ENCODE measurements at regions of chr2 and their contacts with region 1.

Region 1: GRCh38 chr2:36355151-36355889 is at the start of gene CRIM1:
- DNase-seq: peak in 5 of 9 donors; percentile 4 to 72 (median 15)
- ATAC-seq: peak; percentile 58
- H3K4me3 ChIP-seq: peak within 1 kb of the TSS; percentile 62
- H3K4me3 Mint-ChIP-seq: peak within 1 kb of the TSS; percentile 64 to 89 (median 86)
- H3K27ac ChIP-seq: no peak within 1 kb of the TSS
- H3K27ac Mint-ChIP-seq: peak within 1 kb of the TSS in 1 of 9 donors; percentile 4
- H3K4me1 ChIP-seq: peaks cover 9 to 13% of the 10 kb centered on the region in 2 donors
- H3K4me1 Mint-ChIP-seq: peaks cover 19 to 44% (median 28%) of the 10 kb centered on the region in 7 donors
- H3K27me3 ChIP-seq: peaks cover 0 to 7% of the 10 kb centered on the region in 2 donors
- H3K27me3 Mint-ChIP-seq: peaks cover 25 to 65% (median 42%) of the 10 kb centered on the region in 5 donors
- total RNA-seq, gene CRIM1: 0.75 to 7.1 (median 1.2) TPM

Region 2: DNA sequence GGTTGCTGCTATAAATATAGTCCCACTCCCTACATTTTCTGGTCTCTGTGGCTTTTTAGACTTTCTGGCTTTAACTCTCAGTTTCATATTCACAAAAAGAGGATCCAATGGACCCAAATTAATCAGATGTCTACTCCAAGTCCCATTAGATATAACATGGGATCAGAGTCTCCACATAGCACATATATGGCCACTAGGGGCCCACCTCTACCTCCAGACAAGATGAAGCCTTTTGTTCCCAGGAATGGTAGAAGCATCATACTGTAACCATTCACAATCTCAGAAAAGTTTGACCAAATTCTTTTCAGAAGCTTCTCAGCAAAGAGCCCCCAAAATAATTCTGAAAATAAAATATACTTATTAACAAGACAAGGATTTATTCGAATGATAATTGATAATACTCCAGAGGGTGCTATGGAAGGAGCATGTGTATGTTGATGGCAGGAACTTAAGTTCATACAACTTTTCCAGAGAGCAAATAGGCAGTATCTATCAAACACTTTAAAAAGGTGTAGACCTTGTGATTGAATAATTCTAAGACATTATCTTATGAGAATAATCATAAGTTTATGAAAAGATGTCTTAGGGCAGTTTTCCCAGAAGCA is 382.1 kb before region 1 on chr2:
- CTCF ChIA-PET with region 1: interaction called, 3 read pairs
- POLR2A ChIA-PET with region 1: no interaction called
- intact Hi-C with region 1: loop called (anchors 1 to 5 kb)
- DNase-seq: no peak
- ATAC-seq: peak; percentile 47
- H3K4me3 ChIP-seq: no peak overlapping the region
- H3K4me3 Mint-ChIP-seq: no peak overlapping the region
- H3K27ac ChIP-seq: no peak overlapping the region
- H3K27ac Mint-ChIP-seq: peak overlapping the region in 1 of 9 donors; percentile 44
- H3K4me1 ChIP-seq: peaks cover 0 to 12% of the 10 kb centered on the region in 2 donors
- H3K4me1 Mint-ChIP-seq: peaks cover 0 to 7% (median 0%) of the 10 kb centered on the region in 7 donors
- H3K27me3 ChIP-seq: no peaks in the 10 kb centered on the region
- H3K27me3 Mint-ChIP-seq: peaks cover 0 to 26% (median 0%) of the 10 kb centered on the region in 5 donors

Region 3: GRCh38 chr2:36088716-36089328 is 266.5 kb before region 1 on chr2:
- CTCF ChIA-PET with region 1: no interaction called
- POLR2A ChIA-PET with region 1: no interaction called
- intact Hi-C with region 1: no loop called
- DNase-seq: no peak
- ATAC-seq: no peak
- H3K4me3 ChIP-seq: no peak overlapping the region
- H3K4me3 Mint-ChIP-seq: no peak overlapping the region
- H3K27ac ChIP-seq: no peak overlapping the region
- H3K27ac Mint-ChIP-seq: no peak overlapping the region
- H3K4me1 ChIP-seq: no peaks in the 10 kb centered on the region
- H3K4me1 Mint-ChIP-seq: no peaks in the 10 kb centered on the region
- H3K27me3 ChIP-seq: no peaks in the 10 kb centered on the region
- H3K27me3 Mint-ChIP-seq: peaks cover 4 to 10% (median 6%) of the 10 kb centered on the region in 5 donors

Region 4: GRCh38 chr2:36246320-36246990 is 108.9 kb before region 1 on chr2:
- CTCF ChIA-PET with region 1: interaction called, 5 read pairs
- POLR2A ChIA-PET with region 1: no interaction called
- intact Hi-C with region 1: loop called (anchors 1 to 2 kb)
- DNase-seq: peak in 7 of 9 donors; percentile 68 to 87 (median 84)
- ATAC-seq: peak; percentile 89
- H3K4me3 ChIP-seq: no peak overlapping the region
- H3K4me3 Mint-ChIP-seq: peak overlapping the region; percentile 31 to 81 (median 74)
- H3K27ac ChIP-seq: no peak overlapping the region
- H3K27ac Mint-ChIP-seq: peak overlapping the region; percentile 11 to 93 (median 68)
- H3K4me1 ChIP-seq: peaks cover 21 to 52% of the 10 kb centered on the region in 2 donors
- H3K4me1 Mint-ChIP-seq: peaks cover 27 to 68% (median 61%) of the 10 kb centered on the region in 7 donors
- H3K27me3 ChIP-seq: no peaks in the 10 kb centered on the region
- H3K27me3 Mint-ChIP-seq: peaks cover 0 to 13% (median 8%) of the 10 kb centered on the region in 5 donors

Region 5: GRCh38 chr2:36597532-36598377 is 242.4 kb after region 1 on chr2 and contains the start of gene FEZ2:
- CTCF ChIA-PET with region 1: no interaction called
- POLR2A ChIA-PET with region 1: no interaction called
- intact Hi-C with region 1: loop called in 1 of 2 experiments (anchors 1 kb)
- DNase-seq: peak; percentile 24 to 80 (median 41)
- ATAC-seq: peak; percentile 92
- H3K4me3 ChIP-seq: peak within 1 kb of the TSS; percentile 63
- H3K4me3 Mint-ChIP-seq: peak within 1 kb of the TSS; percentile 91 to 98 (median 92)
- H3K27ac ChIP-seq: peak within 1 kb of the TSS; percentile 60
- H3K27ac Mint-ChIP-seq: peak within 1 kb of the TSS; percentile 69 to 97 (median 83)
- H3K4me1 ChIP-seq: peaks cover 9 to 16% of the 10 kb centered on the region in 2 donors
- H3K4me1 Mint-ChIP-seq: peaks cover 26 to 45% (median 35%) of the 10 kb centered on the region in 7 donors
- H3K27me3 ChIP-seq: no peaks in the 10 kb centered on the region
- H3K27me3 Mint-ChIP-seq: no peaks in the 10 kb centered on the region
- total RNA-seq, gene FEZ2: 11.2 to 21.9 (median 14.0) TPM

Region 6: DNA sequence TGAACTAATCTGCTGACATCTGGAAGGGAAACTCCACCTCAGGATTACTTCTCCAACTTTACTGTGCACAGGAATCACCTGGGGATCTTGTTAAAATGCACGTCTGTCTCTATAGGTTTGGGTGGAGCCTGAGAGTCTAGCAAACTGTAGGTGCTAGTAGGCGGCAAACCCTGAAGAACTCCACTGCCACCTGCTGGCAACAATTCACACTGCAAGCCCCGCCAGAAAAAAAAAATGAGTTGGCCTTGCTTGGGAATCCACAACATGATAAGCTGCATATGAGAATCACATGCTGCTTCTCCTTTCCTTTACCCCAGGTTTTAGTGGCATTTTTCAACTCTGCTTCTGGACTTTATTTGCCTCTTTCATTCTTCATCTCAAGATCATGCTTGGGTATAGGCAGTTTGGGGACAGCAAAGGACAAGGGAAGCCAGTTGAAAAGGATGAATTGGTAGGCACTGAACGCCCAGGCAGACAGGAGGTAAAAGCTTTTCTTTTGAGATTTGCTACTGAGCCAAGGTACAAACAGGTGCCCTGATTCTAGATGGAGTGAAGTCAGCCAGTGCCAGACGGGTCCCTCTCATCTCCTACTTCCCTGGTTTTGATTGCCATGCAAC is 430.0 kb after region 1 on chr2:
- CTCF ChIA-PET with region 1: no interaction called
- POLR2A ChIA-PET with region 1: no interaction called
- intact Hi-C with region 1: loop called (anchors 1 to 2 kb)
- DNase-seq: peak; percentile 23 to 74 (median 61)
- ATAC-seq: peak; percentile 85
- H3K4me3 ChIP-seq: no peak overlapping the region
- H3K4me3 Mint-ChIP-seq: no peak overlapping the region
- H3K27ac ChIP-seq: no peak overlapping the region
- H3K27ac Mint-ChIP-seq: peak overlapping the region in 1 of 9 donors; percentile 43
- H3K4me1 ChIP-seq: no peaks in the 10 kb centered on the region
- H3K4me1 Mint-ChIP-seq: peaks cover 0 to 15% (median 2%) of the 10 kb centered on the region in 7 donors
- H3K27me3 ChIP-seq: no peaks in the 10 kb centered on the region
- H3K27me3 Mint-ChIP-seq: peaks cover 0 to 37% (median 5%) of the 10 kb centered on the region in 5 donors